ENCODE measurements at regions of chr18 and their contacts with region 1.

Region 1: DNA sequence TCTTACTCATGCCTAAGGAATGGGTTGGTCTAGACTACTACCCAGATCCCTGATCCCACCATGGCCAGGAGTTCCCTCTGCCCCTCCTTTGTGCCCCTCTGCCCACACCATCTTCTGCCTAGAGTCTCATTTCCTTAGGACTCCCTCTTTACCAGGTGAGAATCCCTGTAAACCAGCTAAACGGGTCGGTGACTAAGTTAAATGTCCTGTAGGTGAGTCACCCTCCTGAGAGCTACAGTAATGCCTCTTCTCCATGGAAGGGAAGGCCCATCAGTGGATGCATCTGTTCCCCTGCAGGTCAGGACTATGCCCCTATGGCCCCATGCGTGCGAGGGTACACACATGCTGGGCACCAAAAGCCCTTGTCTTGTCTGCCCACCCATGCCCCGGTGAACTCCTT is 25.4 kb downstream of the PTGR3 start:
- DNase-seq: no peak
- H3K4me3 ChIP-seq: no peak overlapping the region
- H3K4me1 ChIP-seq: no peaks in the 10 kb centered on the region
- H3K27me3 ChIP-seq: no peaks in the 10 kb centered on the region

Region 2: GRCh38 chr18:74597662-74598349 is 585.7 kb before region 1 on chr18 and contains the start of gene ZNF407:
- in situ Hi-C with region 1: no loop called
- DNase-seq: peak; percentile 83 to 90
- H3K4me3 ChIP-seq: peak within 1 kb of the TSS; percentile 85
- H3K4me1 ChIP-seq: peaks cover 16% of the 10 kb centered on the region
- H3K27me3 ChIP-seq: no peaks in the 10 kb centered on the region

Region 3: GRCh38 chr18:75478996-75479880 is 295.7 kb after region 1 on chr18:
- in situ Hi-C with region 1: loop called (anchors 25 kb)
- DNase-seq: peak; percentile 29 to 63
- H3K4me3 ChIP-seq: no peak overlapping the region
- H3K4me1 ChIP-seq: peaks cover 16% of the 10 kb centered on the region
- H3K27me3 ChIP-seq: no peaks in the 10 kb centered on the region

Measured in HAP-1 (cell line).